ENCODE measurements at regions of chr20 and their contacts with region 1.

Region 1: DNA sequence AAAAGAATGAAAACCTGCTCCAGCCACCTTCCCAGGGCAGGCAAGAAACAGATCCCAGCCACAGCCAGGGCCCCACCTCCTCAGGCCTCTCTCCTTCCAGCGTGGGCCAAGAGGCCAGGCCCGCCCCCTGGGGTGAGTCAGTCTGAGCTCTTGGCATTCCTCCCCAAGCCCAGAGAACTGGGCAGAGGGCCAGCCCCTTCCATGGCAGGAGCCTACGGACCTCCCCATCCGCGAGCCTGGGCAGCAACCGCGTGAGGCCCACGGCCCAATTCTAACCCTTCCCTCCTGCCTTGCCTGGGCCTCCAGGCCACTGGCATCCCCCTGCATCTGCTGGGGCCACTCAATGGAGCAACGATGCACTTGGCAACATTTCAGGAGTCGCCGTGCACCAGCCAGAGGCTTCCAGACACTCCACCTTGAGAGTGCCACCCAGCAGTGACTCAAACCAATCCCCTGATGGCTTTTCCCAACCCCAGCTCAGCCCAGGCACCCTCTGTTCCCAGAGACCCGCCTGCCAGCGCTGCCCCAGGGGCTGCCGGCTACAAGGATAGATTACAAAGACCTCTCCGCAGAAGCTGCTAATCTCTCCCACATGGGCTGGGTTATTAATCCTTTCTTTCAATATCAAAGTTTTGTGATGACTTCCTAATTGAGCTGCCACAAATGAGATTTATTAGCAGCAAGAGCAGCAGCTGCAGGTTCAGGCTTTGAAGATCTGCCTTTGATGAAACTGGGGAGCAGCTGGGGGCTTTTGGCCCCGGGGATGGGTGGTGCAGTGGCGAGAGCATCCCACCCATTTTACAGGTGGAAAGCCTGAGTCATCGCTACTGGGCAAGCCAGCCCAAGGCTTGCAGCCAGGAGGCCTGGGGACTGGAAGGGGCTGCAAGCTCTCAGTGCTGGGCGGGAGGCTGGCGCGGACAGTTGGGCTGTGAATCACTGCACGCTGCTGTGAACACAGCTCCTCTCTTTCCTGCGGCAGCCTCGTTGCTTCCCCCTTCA is 85.7 kb downstream of the NFATC2 start:
- DNase-seq: peak; percentile 98
- H3K4me3 Mint-ChIP-seq: peak overlapping the region; percentile 76
- H3K27ac Mint-ChIP-seq: peak overlapping the region; percentile 85
- H3K4me1 Mint-ChIP-seq: peaks cover 13% of the 10 kb centered on the region
- H3K27me3 Mint-ChIP-seq: no peaks in the 10 kb centered on the region
- CTCF ChIP-seq: no peak

Region 2: GRCh38 chr20:51385646-51386530 is 70.9 kb before region 1 on chr20:
- CTCF ChIA-PET with region 1: interaction called, 12 read pairs
- POLR2A ChIA-PET with region 1: interaction called, 3 read pairs
- intact Hi-C with region 1: no loop called
- DNase-seq: peak; percentile 52
- H3K4me3 Mint-ChIP-seq: no peak overlapping the region
- H3K27ac Mint-ChIP-seq: no peak overlapping the region
- H3K4me1 Mint-ChIP-seq: no peaks in the 10 kb centered on the region
- H3K27me3 Mint-ChIP-seq: no peaks in the 10 kb centered on the region
- CTCF ChIP-seq: peak; percentile 51

Region 3: GRCh38 chr20:51487565-51488268 is 30.9 kb after region 1 on chr20:
- CTCF ChIA-PET with region 1: interaction called, 9 read pairs
- POLR2A ChIA-PET with region 1: interaction called, 11 read pairs
- intact Hi-C with region 1: no loop called
- DNase-seq: peak; percentile 91
- H3K4me3 Mint-ChIP-seq: peak overlapping the region; percentile 61
- H3K27ac Mint-ChIP-seq: peak overlapping the region; percentile 92
- H3K4me1 Mint-ChIP-seq: peaks cover 14% of the 10 kb centered on the region
- H3K27me3 Mint-ChIP-seq: peaks cover 13% of the 10 kb centered on the region
- CTCF ChIP-seq: no peak

Region 4: DNA sequence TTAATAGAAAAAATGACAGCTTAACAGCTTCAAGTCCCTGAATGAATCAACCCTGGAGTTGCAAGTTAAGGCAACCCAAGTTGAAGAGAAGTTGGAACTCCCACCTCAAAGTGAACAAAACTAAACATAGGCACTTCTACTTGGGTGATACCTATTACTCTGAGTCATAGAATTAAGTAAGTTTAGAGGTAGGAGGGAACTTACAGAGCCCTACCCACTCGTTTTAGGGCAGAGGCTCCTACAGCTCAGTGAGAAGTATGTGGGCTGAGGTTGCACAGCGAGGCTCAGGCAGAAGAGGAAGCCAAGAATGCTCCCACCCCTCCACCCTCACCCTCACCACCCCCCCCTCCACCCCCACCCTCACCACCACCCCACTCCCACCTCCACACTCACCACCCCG is 43.5 kb after region 1 on chr20:
- CTCF ChIA-PET with region 1: no interaction called
- POLR2A ChIA-PET with region 1: no interaction called
- intact Hi-C with region 1: no loop called
- DNase-seq: peak; percentile 53
- H3K4me3 Mint-ChIP-seq: no peak overlapping the region
- H3K27ac Mint-ChIP-seq: no peak overlapping the region
- H3K4me1 Mint-ChIP-seq: no peaks in the 10 kb centered on the region
- H3K27me3 Mint-ChIP-seq: peaks cover 13% of the 10 kb centered on the region
- CTCF ChIP-seq: no peak